Left colon (tissue), 2 donors: ENCODE measurements at regions of chr1 and their contacts with region 1.

Region 1: DNA sequence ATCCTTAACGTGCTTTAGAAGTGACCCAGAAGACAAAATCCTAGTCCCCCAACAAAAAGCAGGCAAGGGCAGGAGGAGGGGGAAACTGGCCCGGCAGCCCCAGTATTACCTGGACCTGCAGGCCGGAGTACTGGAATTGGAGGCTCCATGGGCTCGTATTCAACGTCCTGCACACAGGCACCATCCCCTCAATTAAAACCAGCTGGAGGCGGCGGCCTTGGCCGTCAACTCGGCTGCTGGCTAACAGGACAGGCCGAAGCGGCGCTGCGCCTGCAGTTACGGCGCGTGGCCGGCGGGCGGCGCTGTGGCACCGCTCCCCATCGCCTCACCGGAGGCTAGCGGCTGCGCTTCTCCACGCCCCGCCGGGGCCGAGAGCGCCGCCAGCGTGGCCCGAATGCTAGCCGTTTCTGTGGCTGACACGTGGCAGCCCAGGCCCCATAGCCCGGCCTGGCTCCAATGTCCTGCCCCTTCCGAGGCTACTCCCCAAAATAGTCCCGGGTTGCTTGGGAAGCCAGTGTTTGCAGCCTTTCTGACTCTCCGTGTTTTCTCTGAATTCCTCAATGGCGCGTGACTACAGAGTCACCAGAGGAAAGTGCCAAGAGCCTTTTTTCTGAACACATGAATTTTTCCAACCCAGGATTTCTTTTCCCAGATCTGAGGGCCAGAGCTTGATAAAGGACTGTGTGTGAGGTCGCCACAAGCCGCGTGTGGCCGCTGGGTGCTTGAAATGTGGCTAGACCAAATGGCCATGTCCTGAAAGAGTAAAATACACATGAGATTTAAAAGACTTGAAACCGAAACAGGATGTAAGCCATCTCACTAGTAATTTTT is 82.5 kb downstream of the HHIPL2 start:
- DNase-seq: peak; percentile 83 to 86
- ATAC-seq: peak; percentile 99

Region 2: GRCh38 chr1:222334026-222334680 is 131.3 kb before region 1 on chr1:
- intact Hi-C with region 1: no loop called
- DNase-seq: no peak
- ATAC-seq: no peak

Region 3: DNA sequence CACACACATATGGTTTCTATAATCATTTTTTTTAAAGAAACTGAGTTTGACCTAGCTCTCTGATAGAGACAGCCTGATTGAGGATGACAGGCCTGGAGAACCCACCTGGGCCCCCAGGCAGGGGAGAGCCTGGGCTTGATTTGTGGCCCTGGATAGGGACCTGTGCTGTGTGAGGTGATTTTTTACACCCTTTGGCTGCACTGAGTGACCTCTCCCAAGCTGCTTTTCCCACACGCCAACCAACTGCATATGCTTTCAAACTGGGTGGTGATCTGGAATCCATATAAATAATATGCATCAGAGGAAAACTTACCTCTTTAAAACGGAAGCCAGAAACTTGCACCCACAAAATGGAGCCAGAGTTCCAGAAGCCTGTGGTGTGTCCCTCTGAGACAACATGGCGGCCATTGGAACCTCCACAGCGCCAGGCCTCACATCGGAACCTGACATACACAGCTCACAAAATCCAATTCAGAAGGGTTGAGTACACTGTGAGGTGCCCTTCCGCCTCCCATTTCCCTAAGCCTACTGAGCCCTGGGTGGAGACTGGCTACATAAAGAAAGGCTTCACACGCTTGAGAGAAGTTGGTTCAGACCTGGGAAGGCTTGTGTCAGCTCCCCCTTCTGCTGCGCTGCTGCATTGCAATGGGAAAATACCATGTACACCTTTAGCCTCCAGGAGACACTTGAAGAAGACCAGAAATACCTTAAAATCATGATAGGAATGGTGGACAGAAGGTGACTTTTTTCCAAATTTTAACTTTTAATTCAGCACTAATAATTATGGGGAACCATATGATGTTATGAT is 78.2 kb before region 1 on chr1:
- intact Hi-C with region 1: no loop called
- DNase-seq: no peak
- ATAC-seq: no peak

Region 4: GRCh38 chr1:222634180-222635013 is 169.0 kb after region 1 on chr1:
- intact Hi-C with region 1: loop called in 1 of 2 experiments (anchors 2 kb)
- DNase-seq: peak; percentile 32 to 62
- ATAC-seq: peak; percentile 76

Region 5: DNA sequence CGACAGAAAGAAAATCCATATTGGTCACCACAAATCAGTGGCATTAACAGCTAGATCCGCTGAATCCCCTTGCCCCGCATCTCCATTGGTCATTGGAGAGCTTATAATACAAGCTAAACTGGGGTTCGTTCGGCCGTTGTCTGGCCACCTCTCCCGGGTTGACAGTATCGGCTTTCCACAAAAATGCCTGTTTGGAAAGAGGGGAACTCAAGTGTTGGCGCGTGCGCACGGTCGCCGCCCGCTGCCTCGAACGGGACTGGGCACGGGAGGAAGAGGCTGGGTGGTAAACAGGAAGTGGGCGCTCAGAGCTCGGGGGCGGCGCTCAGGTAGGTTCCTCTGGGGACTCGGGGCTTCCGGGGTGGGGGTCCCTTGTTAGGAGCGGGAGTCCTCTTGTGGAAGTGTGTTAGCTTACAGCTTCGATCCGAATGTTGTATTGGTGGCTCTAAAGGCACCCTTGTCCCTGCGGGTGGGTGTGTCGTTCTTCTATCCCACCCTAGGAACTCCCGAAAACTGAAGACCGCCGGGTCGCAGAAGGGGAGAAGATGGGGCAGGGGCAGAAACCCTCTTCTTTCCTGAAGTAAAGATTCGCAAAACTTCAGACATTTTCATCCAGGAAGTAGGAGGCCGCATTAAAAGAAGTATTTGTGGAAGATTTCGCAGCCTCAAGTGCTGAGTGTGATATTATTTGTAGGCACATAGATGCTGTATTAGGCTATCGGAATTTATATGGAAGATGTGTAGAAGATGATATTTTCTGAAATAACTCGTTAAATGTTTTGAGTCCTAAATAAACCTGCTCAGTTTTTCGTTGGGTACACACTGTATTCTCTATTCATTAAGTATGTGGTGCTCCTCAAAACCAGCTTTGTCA is 247.9 kb after region 1 on chr1:
- intact Hi-C with region 1: loop called in 1 of 2 experiments (anchors 5 kb)
- DNase-seq: peak; percentile 94 to 95
- ATAC-seq: peak; percentile 83